ENCODE measurements at regions of chrX and their contacts with region 1.

Region 1: GRCh38 chrX:143633461-143634308 is 2.2 kb downstream of the SLITRK4 start:
- DNase-seq: peak in 1 of 2 donors; percentile 10
- ATAC-seq: peak; percentile 32 to 34
- H3K4me3 ChIP-seq: peak overlapping the region; percentile 52 to 62 (median 58)
- H3K27ac ChIP-seq: peak overlapping the region; percentile 75 to 79 (median 78)
- H3K4me1 ChIP-seq: no peaks in the 10 kb centered on the region
- H3K27me3 ChIP-seq: peaks cover 0 to 5% (median 0%) of the 10 kb centered on the region in 3 donors
- CTCF ChIP-seq: no peak
- POLR2A ChIP-seq: no peak

Region 2: DNA sequence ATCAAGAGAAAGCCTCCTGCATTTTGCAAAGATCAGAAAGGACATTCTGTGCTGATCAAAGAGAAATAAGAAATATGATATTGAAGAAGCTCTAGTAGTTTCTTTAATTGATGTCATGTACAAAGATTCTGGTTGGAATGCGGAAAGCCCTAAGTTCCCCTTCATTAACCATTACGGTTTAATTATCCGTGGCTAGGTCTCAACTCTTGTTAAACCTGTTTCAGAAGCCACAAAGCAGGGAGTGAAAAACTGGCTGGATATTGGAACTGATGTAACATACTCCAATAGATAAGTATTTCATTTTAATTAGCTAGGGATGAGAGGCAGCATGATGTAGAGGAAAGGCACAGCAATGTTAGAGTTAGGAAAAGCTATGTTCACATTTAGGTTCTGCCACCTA is 172.1 kb before region 1 on chrX:
- in situ Hi-C with region 1: no loop called
- intact Hi-C with region 1: no loop called
- DNase-seq: no peak
- ATAC-seq: no peak
- H3K4me3 ChIP-seq: no peak overlapping the region
- H3K27ac ChIP-seq: no peak overlapping the region
- H3K4me1 ChIP-seq: no peaks in the 10 kb centered on the region
- H3K27me3 ChIP-seq: no peaks in the 10 kb centered on the region
- CTCF ChIP-seq: no peak
- POLR2A ChIP-seq: no peak

Region 3: GRCh38 chrX:143580266-143580665 is 53.4 kb before region 1 on chrX:
- in situ Hi-C with region 1: no loop called
- intact Hi-C with region 1: loop called (anchors 2 kb)
- DNase-seq: peak; percentile 25 to 26
- ATAC-seq: peak; percentile 66 to 79
- H3K4me3 ChIP-seq: no peak overlapping the region
- H3K27ac ChIP-seq: peak overlapping the region; percentile 66 to 77 (median 72)
- H3K4me1 ChIP-seq: peaks cover 0 to 3% of the 10 kb centered on the region in 2 donors
- H3K27me3 ChIP-seq: no peaks in the 10 kb centered on the region
- CTCF ChIP-seq: no peak
- POLR2A ChIP-seq: no peak

Measured in gastrocnemius medialis (tissue), 4 donors.